ENCODE measurements at regions of chr6 and their contacts with region 1.

Region 1: DNA sequence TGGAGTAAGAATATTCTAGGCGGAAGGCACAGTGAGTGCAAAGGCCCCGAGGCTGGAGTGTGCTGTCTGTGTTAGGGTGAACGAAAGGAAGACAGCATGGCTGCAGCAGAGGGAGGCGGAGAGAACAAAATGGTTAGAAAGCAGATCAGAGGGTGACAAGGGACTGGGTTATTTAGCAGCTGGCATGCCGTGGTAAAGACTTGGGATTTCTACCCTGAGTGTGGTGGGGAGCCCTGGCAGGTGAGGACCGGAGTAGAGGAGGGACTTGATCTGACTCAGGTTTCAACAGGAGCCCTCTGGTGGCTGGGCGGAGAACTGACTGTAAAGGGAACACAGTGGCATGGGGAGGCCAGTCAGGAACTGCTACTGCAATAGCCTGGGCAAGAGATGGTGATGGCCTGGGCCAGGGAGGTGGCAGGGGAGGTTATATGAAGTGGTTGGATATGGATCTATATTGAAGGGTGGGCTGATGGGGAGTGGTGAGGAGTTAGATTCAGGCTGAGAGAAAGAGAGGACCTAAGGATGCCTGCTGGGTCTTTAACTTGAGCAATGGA is 38.0 kb downstream of the PIM1 start:
- DNase-seq: peak; percentile 98
- H3K4me3 Mint-ChIP-seq: no peak overlapping the region
- H3K27ac Mint-ChIP-seq: peak overlapping the region; percentile 73
- H3K4me1 Mint-ChIP-seq: peaks cover 69% of the 10 kb centered on the region
- H3K27me3 Mint-ChIP-seq: no peaks in the 10 kb centered on the region

Region 2: DNA sequence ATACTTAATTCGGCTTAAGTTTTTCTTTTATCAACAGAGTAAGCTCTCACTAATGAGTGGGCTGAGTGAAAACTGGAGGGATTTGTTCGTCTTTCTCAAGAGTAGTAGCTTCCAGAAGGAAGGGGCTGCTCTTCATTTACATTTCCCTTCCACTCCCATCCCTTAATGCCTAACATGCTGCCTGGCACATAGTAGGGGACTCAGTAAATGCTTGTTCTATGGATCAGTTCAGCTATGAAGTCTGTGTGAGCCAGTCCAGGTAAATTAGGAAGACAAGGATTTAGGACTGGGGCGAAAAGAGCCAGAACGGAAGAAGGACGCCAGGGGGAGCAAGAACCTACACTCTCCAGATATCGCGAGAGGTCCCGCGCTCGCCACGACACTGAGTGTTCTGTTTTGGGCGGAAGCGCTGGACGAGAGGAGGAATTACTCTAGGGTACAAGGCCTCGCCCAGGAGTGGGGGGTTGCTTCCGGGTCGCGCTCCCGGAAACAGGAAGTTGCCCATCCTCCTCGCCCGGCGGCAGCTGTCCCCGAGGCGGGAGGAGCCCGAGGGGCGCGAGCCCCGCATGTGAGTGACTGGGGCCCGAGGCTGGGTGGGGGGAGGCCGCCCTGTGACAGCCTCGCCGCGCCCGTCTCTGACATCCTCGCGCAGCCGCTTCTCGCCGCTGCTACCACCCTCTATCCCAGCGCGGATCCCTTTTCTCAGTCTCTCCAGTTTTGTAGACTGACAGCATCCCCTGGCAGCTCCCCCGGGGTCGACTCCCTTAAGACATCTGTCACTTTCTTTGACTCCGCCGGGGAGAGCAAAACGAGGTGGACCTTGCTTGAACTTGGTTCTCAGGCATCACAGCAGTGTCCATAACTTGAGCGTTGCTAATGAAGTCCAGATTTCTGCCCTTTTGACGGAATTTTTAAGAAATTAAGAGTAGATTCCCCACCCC is 322.2 kb before region 1 on chr6 and contains the start of gene C6orf89:
- CTCF ChIA-PET with region 1: interaction called, 14 read pairs
- intact Hi-C with region 1: loop called (anchors 1 kb)
- DNase-seq: peak; percentile 99
- H3K4me3 Mint-ChIP-seq: peak within 1 kb of the TSS; percentile 87
- H3K27ac Mint-ChIP-seq: peak within 1 kb of the TSS; percentile 92
- H3K4me1 Mint-ChIP-seq: peaks cover 33% of the 10 kb centered on the region
- H3K27me3 Mint-ChIP-seq: no peaks in the 10 kb centered on the region
- total RNA-seq, gene C6orf89: 24.2 to 24.5 TPM

Region 3: GRCh38 chr6:37029249-37029971 is 178.6 kb before region 1 on chr6:
- CTCF ChIA-PET with region 1: interaction called, 704 read pairs
- intact Hi-C with region 1: loop called (anchors 1 kb)
- DNase-seq: peak; percentile 67
- H3K4me3 Mint-ChIP-seq: no peak overlapping the region
- H3K27ac Mint-ChIP-seq: peak overlapping the region; percentile 26
- H3K4me1 Mint-ChIP-seq: peaks cover 46% of the 10 kb centered on the region
- H3K27me3 Mint-ChIP-seq: no peaks in the 10 kb centered on the region

Region 4: GRCh38 chr6:37137201-37138090 is 70.5 kb before region 1 on chr6:
- CTCF ChIA-PET with region 1: no interaction called
- intact Hi-C with region 1: loop called (anchors 2 kb)
- DNase-seq: peak; percentile 72
- H3K4me3 Mint-ChIP-seq: no peak overlapping the region
- H3K27ac Mint-ChIP-seq: peak overlapping the region; percentile 74
- H3K4me1 Mint-ChIP-seq: peaks cover 39% of the 10 kb centered on the region
- H3K27me3 Mint-ChIP-seq: no peaks in the 10 kb centered on the region

Region 5: GRCh38 chr6:37190159-37190535 is 17.8 kb before region 1 on chr6:
- CTCF ChIA-PET with region 1: interaction called, 16 read pairs
- intact Hi-C with region 1: loop called (anchors 1 kb)
- DNase-seq: peak; percentile 68
- H3K4me3 Mint-ChIP-seq: no peak overlapping the region
- H3K27ac Mint-ChIP-seq: peak overlapping the region; percentile 82
- H3K4me1 Mint-ChIP-seq: peaks cover 77% of the 10 kb centered on the region
- H3K27me3 Mint-ChIP-seq: no peaks in the 10 kb centered on the region

Region 6: GRCh38 chr6:37314487-37315156 is 106.6 kb after region 1 on chr6:
- CTCF ChIA-PET with region 1: interaction called, 3 read pairs
- intact Hi-C with region 1: loop called (anchors 1 kb)
- DNase-seq: peak; percentile 68
- H3K4me3 Mint-ChIP-seq: no peak overlapping the region
- H3K27ac Mint-ChIP-seq: no peak overlapping the region
- H3K4me1 Mint-ChIP-seq: peaks cover 2% of the 10 kb centered on the region
- H3K27me3 Mint-ChIP-seq: no peaks in the 10 kb centered on the region